ENCODE measurements at regions of chr16 and their contacts with region 1.

Region 1: DNA sequence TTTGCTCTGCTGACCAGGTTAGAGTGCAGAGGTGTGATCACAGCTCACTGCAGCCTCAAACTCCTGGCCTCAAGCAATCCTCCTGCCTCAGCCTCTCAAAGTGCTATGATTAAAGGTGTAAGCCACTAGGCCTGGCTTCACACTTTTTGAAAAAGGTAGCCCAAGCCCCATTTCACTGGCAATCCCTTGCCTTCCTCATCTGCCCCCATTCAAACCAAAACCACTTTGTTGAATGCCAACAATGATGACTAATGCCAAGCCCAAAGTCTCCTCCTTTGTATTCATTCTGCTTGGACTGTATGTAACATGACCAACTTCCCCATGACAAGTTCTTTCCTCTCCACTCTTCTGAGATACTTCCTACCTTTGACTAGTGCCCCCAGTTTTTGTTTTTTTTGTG is 33.1 kb downstream of the N4BP1 start:
- DNase-seq: peak; percentile 55
- H3K4me3 Mint-ChIP-seq: no peak overlapping the region
- H3K27ac Mint-ChIP-seq: peak overlapping the region; percentile 76
- H3K4me1 Mint-ChIP-seq: peaks cover 56% of the 10 kb centered on the region
- H3K27me3 Mint-ChIP-seq: no peaks in the 10 kb centered on the region

Region 2: DNA sequence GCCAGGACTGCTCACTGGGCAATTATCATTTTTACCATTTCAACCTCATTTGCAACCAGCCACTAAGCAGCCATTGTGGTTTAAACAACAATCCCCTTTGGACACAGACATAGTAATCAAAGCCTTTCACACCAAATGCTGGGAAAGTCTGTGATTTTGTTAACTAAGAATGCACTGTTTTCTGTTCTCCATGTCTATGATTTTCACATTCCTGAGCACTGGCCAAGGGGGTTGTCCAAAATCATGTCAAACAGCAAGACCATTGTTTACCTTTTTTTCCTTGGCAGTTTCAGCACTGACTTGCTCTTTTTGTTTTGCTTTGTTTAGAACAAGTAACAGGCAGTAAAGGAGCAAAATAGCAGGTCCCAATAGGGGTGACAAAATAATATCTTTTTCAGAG is 85.4 kb before region 1 on chr16:
- CTCF ChIA-PET with region 1: no interaction called
- POLR2A ChIA-PET with region 1: no interaction called
- intact Hi-C with region 1: no loop called
- DNase-seq: no peak
- H3K4me3 Mint-ChIP-seq: no peak overlapping the region
- H3K27ac Mint-ChIP-seq: no peak overlapping the region
- H3K4me1 Mint-ChIP-seq: no peaks in the 10 kb centered on the region
- H3K27me3 Mint-ChIP-seq: peaks cover 13% of the 10 kb centered on the region

Region 3: DNA sequence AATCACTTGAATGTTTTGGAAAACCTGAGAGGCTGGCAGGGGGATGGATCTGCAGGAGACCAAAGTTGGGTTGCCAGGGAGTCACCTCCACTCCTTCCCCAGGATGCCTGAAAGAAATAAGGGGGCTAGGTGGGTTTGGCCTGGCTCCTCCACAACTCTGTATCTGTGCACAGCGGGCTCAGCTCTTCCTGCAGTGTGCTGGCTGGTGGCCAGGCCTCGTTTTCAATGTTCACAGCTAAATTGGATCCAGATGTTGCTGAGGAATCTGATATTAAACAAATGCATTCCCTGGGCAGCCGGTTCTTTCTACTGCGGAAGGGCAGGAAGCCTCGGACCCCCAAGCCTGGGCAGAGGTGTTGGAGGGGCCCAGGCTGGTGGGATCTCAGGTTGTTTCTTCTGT is 73.1 kb before region 1 on chr16:
- CTCF ChIA-PET with region 1: no interaction called
- POLR2A ChIA-PET with region 1: no interaction called
- intact Hi-C with region 1: no loop called
- DNase-seq: no peak
- H3K4me3 Mint-ChIP-seq: no peak overlapping the region
- H3K27ac Mint-ChIP-seq: no peak overlapping the region
- H3K4me1 Mint-ChIP-seq: no peaks in the 10 kb centered on the region
- H3K27me3 Mint-ChIP-seq: peaks cover 3% of the 10 kb centered on the region

Region 4: GRCh38 chr16:48596326-48596725 is 19.4 kb after region 1 on chr16:
- CTCF ChIA-PET with region 1: no interaction called
- POLR2A ChIA-PET with region 1: interaction called, 3 read pairs
- intact Hi-C with region 1: loop called (anchors 1 kb)
- DNase-seq: peak; percentile 77
- H3K4me3 Mint-ChIP-seq: no peak overlapping the region
- H3K27ac Mint-ChIP-seq: peak overlapping the region; percentile 64
- H3K4me1 Mint-ChIP-seq: peaks cover 54% of the 10 kb centered on the region
- H3K27me3 Mint-ChIP-seq: no peaks in the 10 kb centered on the region

Region 5: DNA sequence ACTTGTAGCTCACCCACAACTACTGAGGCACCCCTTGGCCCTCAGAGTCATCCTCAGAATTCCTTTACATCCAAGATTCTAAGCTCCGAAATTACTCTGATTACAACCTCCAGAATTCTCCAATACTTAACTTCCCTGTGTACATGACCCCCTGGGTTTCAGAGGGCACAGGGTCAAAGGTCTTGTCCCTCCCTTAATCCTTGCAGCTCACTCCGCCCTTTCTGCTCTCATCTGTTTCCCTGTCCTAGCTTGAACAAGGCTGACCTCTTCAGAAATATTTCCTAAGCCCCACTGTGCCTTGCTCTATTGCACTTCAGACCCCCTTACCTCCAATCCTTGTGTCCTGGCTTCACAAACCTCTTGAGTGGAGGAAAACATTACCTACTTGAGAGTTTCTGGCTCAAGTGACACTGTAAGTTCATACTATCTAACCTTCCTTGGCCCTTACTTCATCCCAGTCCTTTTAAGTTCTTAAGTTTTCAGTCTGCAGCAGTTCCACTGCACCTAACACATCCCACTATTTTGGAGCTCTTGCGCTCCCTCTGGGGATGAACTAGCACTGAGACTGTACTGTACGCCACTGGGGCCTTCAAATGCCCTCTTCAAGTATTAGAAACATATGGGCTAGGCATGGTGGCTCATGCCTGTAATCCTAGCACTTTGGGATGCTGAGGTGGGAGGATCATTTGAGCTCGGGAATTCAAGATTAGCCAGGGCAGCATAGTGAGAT is 26.9 kb after region 1 on chr16:
- CTCF ChIA-PET with region 1: no interaction called
- POLR2A ChIA-PET with region 1: interaction called, 3 read pairs
- intact Hi-C with region 1: loop called (anchors 1 kb)
- DNase-seq: no peak
- H3K4me3 Mint-ChIP-seq: no peak overlapping the region
- H3K27ac Mint-ChIP-seq: peak overlapping the region; percentile 14
- H3K4me1 Mint-ChIP-seq: peaks cover 51% of the 10 kb centered on the region
- H3K27me3 Mint-ChIP-seq: no peaks in the 10 kb centered on the region

Region 6: GRCh38 chr16:48647794-48648193 is 70.9 kb after region 1 on chr16:
- CTCF ChIA-PET with region 1: no interaction called
- POLR2A ChIA-PET with region 1: no interaction called
- intact Hi-C with region 1: no loop called
- DNase-seq: no peak
- H3K4me3 Mint-ChIP-seq: no peak overlapping the region
- H3K27ac Mint-ChIP-seq: no peak overlapping the region
- H3K4me1 Mint-ChIP-seq: no peaks in the 10 kb centered on the region
- H3K27me3 Mint-ChIP-seq: peaks cover 5% of the 10 kb centered on the region

Measured in activated CD4-positive, alpha-beta memory T cell treated with anti-CD3 and anti-CD28 coated beads for 36 hours (primary cell).